ENCODE measurements at regions of chr13 and their contacts with region 1.

Region 1: DNA sequence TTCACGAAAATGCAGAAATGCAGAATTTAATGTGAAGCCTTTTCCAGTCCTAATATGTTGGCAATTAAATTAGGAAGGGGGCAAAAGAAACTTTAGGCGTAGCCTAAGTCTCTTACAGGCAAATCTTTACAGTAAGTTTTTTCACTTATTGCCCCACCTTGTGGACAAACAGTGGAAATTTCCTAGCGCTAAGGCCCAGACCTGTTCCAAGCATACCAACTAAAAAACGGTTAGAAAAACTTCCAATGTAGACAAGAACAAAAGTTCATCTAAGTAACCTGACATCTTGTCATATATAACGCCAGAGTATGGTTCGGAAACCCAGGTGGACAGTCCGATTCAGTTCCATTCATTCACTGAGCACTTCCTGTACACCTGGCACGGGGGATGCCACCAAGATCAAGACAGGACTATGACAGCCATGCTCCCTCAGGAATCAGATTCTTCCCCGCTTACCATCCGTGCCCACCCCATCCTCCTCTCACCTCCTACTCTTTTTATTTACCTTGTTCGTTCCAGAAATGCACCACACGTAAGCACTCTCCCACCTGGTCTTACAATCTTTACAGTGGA is 4.9 kb downstream of the ZAR1L start:
- DNase-seq: no peak
- H3K4me3 Mint-ChIP-seq: no peak overlapping the region
- H3K27ac Mint-ChIP-seq: no peak overlapping the region
- H3K4me1 Mint-ChIP-seq: peaks cover 30% of the 10 kb centered on the region
- H3K27me3 Mint-ChIP-seq: peaks cover 6% of the 10 kb centered on the region

Region 2: GRCh38 chr13:32019612-32020233 is 290.5 kb before region 1 on chr13:
- intact Hi-C with region 1: loop called (anchors 5 kb)
- DNase-seq: peak; percentile 12
- H3K4me3 Mint-ChIP-seq: no peak overlapping the region
- H3K27ac Mint-ChIP-seq: no peak overlapping the region
- H3K4me1 Mint-ChIP-seq: no peaks in the 10 kb centered on the region
- H3K27me3 Mint-ChIP-seq: no peaks in the 10 kb centered on the region

Region 3: GRCh38 chr13:32246468-32246867 is 63.8 kb before region 1 on chr13:
- intact Hi-C with region 1: loop called (anchors 1 kb)
- DNase-seq: peak; percentile 14
- H3K4me3 Mint-ChIP-seq: no peak overlapping the region
- H3K27ac Mint-ChIP-seq: no peak overlapping the region
- H3K4me1 Mint-ChIP-seq: peaks cover 13% of the 10 kb centered on the region
- H3K27me3 Mint-ChIP-seq: no peaks in the 10 kb centered on the region

Measured in activated T-helper 2 cell treated with anti-CD3 and anti-CD28 coated beads, Interferon-gamma antibody, Interleukin-2, Interleukin-4, amounts not matched to agents 10 μg/mL and 5 μg/mL and 100 μg/mL, durations not matched to agents 14 hours and 24 hours and 36 hours (primary cell).